ENCODE measurements at regions of chrX and their contacts with region 1.

Region 1: GRCh38 chrX:153927922-153928760 is 2.1 kb upstream of the ARHGAP4 start:
- DNase-seq: peak; percentile 93
- ATAC-seq: peak; percentile 85
- H3K4me3 ChIP-seq: peak overlapping the region; percentile 69 to 71
- H3K27ac ChIP-seq: peak overlapping the region; percentile 99
- H3K4me1 ChIP-seq: peaks cover 22 to 43% of the 10 kb centered on the region in 2 experiments
- H3K27me3 ChIP-seq: no peaks in the 10 kb centered on the region
- CTCF ChIP-seq: peak in 1 of 3 experiments; percentile 8; a peak in 1 of 6 replicates
- POLR2A ChIP-seq: peak; percentile 61
- RAD21 ChIP-seq: no peak

Region 2: DNA sequence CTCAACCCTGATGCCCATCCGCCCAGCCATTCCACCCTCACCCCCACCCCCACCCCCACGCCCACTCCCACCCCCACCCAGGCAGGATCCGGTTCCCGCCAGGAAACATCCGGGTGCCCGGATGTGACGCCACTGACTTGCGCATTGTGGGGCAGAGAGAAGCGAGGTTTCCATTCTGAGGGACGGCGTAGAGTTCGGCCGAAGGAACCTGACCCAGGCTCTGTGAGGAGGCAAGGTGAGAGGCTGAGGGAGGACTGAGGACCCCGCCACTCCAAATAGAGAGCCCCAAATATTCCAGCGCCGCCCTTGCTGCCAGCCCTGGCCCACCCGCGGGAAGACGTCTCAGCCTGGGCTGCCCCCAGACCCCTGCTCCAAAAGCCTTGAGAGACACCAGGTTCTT is 749.0 kb before region 1 on chrX and contains the start of gene MAGEA1:
- CTCF ChIA-PET with region 1: no interaction called
- POLR2A ChIA-PET with region 1: no interaction called
- RAD21 ChIA-PET with region 1: no interaction called
- intact Hi-C with region 1: no loop called
- DNase-seq: no peak
- ATAC-seq: no peak
- H3K4me3 ChIP-seq: no peak within 1 kb of the TSS
- H3K27ac ChIP-seq: no peak within 1 kb of the TSS
- H3K4me1 ChIP-seq: no peaks in the 10 kb centered on the region
- H3K27me3 ChIP-seq: 0 out of 2 replicates have a peak, but pooled peaks cover 6% of the 10 kb centered on the region
- CTCF ChIP-seq: no peak
- POLR2A ChIP-seq: no peak
- RAD21 ChIP-seq: no peak
- total RNA-seq, gene MAGEA1: not detected

Region 3: DNA sequence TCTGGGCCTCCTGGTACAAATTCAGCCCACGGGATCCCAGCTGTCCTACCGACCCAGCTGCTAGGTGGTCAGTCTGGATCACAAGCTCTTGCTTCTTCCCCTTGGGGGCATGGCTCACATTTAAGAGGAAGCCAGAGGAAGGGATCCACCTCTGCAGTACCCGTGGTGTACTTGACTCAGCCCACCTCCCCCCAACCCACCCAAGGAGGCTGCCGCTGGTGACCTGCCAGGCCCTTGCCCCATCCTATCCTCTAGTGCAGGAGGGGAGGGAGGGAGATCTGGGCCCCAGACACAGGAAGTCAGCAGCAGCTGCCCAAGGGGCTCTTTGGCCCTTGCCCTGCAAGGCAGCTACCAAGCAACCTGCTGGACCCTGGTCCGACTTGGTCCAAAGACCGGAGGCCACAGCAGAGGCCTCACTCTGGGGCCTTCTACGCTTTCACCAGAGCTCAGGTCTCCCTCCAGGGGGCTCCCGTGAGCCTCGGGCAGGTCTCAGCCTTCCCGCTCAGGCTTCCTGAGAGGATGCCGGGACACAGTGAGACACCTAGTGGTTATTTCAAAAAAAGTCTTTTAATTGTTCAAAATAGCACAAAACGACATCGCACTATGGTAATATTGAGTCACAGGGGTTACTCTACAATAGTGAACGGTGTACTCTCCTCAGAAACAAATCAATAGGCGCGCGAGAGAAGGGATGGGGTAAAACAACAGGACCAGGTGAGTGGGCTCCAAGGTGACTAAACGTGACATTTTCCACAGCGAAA is 19.0 kb after region 1 on chrX:
- CTCF ChIA-PET with region 1: interaction called, 14 read pairs
- POLR2A ChIA-PET with region 1: interaction called, 6 read pairs
- RAD21 ChIA-PET with region 1: no interaction called
- intact Hi-C with region 1: loop called (anchors 1 kb)
- DNase-seq: peak; percentile 67
- ATAC-seq: peak; percentile 94
- H3K4me3 ChIP-seq: no peak overlapping the region
- H3K27ac ChIP-seq: peak overlapping the region; percentile 38; the same call in 1 of the 2 replicates
- H3K4me1 ChIP-seq: no peaks in the 10 kb centered on the region; a peak in 1 of 4 replicates
- H3K27me3 ChIP-seq: no peaks in the 10 kb centered on the region
- CTCF ChIP-seq: peak in 2 of 3 experiments; percentile 78 to 84; a peak in 4 of 6 replicates
- POLR2A ChIP-seq: no peak
- RAD21 ChIP-seq: no peak

Region 4: DNA sequence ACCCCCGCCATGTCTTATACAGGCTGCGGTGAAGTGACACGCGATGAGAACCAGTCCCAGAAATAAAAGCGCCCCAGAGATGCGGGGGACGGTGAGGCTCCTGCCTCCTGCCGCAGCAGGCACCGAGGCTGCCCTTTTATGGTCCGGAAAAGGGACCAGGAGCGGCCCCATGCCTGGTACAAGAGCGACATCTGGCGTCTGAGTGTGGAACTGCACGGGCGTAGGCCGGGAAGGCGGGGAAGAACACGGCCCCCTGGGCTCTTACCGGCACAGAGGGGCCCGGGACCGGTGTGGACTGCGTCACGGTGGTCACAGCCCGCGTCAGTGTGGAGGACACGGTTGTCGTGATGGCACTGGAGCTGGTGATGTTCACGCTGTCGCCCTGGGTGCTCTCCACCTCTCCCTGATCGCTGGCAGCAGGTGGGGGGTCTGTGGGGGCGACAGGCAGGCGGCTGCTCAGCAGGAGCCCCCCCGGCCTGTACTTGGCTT is 25.2 kb after region 1 on chrX:
- CTCF ChIA-PET with region 1: no interaction called
- POLR2A ChIA-PET with region 1: no interaction called
- RAD21 ChIA-PET with region 1: no interaction called
- intact Hi-C with region 1: loop called (anchors 1 kb)
- DNase-seq: no peak
- ATAC-seq: peak; percentile 72
- H3K4me3 ChIP-seq: no peak overlapping the region
- H3K27ac ChIP-seq: no peak overlapping the region
- H3K4me1 ChIP-seq: no peaks in the 10 kb centered on the region
- H3K27me3 ChIP-seq: no peaks in the 10 kb centered on the region
- CTCF ChIP-seq: peak in 2 of 3 experiments; percentile 79 to 80; a peak in 4 of 6 replicates
- POLR2A ChIP-seq: no peak
- RAD21 ChIP-seq: no peak

Region 5: DNA sequence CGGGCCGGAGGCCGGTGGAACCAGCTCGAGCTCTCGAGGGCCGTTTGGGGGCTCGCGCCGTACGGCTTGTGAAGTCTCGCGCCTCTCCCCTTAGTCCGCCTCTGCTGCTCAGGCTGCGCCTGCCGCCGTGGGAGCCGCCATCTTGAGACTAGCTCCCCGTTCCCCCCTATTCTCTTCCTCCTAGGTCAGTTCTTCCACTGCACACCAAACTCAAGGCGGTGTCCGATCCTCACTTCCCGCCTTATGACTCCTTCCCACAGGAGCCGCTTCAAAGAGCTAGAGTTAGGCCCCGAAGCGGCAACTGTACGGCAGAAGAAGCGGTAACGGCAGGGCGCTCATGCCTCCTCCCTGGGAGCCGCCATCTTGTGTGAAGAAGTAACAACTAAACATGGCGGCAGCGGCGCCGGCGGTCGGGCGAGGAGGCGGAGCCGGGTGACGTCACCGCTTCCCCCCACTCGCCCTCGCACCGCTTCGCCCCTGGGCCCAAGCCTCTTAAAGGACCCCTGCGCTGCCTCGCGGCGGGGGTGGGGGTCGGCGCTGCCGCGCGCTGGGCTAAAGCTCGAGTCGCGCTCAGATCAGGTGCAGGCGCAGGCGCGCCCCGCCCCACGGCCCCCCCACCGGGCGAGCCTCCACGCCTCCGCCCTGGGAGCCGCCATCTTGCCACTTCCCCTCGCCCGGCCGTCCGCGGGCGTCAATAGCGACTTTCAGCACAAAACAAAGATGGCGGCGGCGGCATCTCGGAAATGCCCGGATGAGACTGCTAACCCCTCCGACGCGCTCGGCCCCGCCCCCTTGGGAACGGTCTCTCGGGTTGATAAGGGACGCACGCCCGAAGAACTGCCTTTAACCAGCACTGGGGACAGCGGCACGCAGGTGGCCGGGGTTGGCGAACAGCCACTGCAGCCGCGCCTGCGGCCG is 43.6 kb after region 1 on chrX and contains the start of gene HCFC1:
- CTCF ChIA-PET with region 1: no interaction called
- POLR2A ChIA-PET with region 1: interaction called, 10 read pairs
- RAD21 ChIA-PET with region 1: no interaction called
- intact Hi-C with region 1: no loop called
- DNase-seq: peak; percentile 69
- ATAC-seq: peak; percentile 47
- H3K4me3 ChIP-seq: peak within 1 kb of the TSS; percentile 75 to 78
- H3K27ac ChIP-seq: peak within 1 kb of the TSS; percentile 90
- H3K4me1 ChIP-seq: peaks cover 12 to 28% of the 10 kb centered on the region in 2 experiments
- H3K27me3 ChIP-seq: no peaks in the 10 kb centered on the region
- CTCF ChIP-seq: no peak
- POLR2A ChIP-seq: no peak
- RAD21 ChIP-seq: no peak
- total RNA-seq, gene HCFC1: 72.8 TPM